ENCODE measurements at regions of chr14 and their contacts with region 1.

Region 1: DNA sequence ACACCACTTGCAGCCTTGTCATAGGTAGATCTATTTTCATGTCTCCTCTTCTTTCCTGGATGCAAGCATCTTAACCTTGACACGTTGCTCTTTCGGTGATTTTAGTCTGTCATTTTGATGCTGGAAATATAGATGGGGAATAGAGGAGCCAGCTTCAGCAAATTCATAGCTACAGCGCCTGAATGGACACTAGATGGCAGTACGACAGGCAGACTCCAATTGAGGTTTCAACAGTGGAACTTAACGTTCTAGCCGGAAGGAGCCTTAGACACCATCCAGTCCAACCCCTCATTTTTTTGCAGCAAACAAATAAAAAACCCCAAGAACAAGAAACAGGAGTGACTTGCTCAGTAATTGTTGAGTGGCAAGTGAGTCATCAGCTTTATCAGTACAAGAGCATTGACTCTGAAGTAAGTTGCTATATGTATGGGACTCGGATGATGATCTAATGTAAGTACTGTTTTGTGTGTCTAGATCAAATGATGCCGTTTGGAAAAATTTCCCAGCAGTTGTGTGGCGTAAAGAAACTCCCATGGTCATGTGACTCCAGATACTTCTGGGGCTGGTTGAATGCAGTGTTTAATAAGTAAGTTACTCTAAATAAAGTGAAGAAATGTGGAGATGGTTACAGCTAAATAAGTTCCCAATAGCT is 9.0 kb downstream of the DMAC2L start:
- DNase-seq: peak; percentile 86
- H3K4me3 ChIP-seq: peak overlapping the region; percentile 41
- H3K27ac ChIP-seq: peak overlapping the region; percentile 58
- H3K27me3 ChIP-seq: no peaks in the 10 kb centered on the region
- CTCF ChIP-seq: peak; percentile 95

Region 2: GRCh38 chr14:50003213-50004031 is 317.7 kb before region 1 on chr14:
- CTCF ChIA-PET with region 1: no interaction called
- POLR2A ChIA-PET with region 1: no interaction called
- DNase-seq: no peak
- H3K4me3 ChIP-seq: peak overlapping the region; percentile 58
- H3K27ac ChIP-seq: peak overlapping the region; percentile 39
- H3K27me3 ChIP-seq: no peaks in the 10 kb centered on the region
- CTCF ChIP-seq: peak; percentile 12; the same call in 1 of the 2 replicates

Region 3: DNA sequence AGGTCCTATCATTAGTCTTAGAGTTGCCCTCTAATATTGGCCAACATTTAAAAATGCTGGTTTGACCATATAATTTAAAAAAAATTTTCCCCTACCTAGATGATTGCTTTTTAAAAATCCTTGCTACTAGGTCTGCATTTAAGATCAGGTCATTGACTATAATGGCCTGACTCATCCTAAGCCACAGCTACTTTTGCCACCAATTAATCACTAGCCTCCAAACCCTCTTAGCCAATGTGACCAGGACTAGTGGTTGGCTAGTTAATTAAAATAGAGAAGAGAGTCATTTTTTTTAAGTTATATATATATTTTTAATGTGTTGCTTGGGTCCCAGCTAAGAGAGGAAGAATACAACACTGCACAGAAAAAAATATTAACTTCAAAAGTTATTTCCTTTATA is 147.2 kb before region 1 on chr14:
- CTCF ChIA-PET with region 1: no interaction called
- POLR2A ChIA-PET with region 1: no interaction called
- DNase-seq: no peak
- H3K4me3 ChIP-seq: no peak overlapping the region
- H3K27ac ChIP-seq: no peak overlapping the region
- H3K27me3 ChIP-seq: no peaks in the 10 kb centered on the region
- CTCF ChIP-seq: no peak

Region 4: DNA sequence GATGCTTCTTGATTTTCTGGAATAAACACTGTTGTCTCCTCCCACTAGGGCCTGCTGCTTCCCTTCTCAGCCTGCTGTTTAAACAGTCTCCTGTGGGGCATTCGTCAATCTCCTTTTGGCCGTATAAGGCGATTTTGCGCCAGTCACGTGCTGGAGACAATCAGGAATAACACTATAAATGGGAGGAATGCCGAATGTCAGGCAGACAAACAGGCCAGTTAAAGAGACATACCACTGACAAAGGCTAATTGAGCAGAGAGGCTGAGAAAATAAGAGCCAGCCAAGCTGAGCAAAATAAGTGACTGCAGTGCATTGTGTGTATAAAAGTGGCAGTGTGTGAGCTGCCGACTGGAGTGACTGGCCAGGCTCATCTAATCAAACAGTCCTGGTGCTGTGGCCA is 14.3 kb after region 1 on chr14:
- CTCF ChIA-PET with region 1: interaction called, 18 read pairs
- POLR2A ChIA-PET with region 1: interaction called, 10 read pairs
- DNase-seq: no peak
- H3K4me3 ChIP-seq: no peak overlapping the region
- H3K27ac ChIP-seq: peak overlapping the region; percentile 12
- H3K27me3 ChIP-seq: no peaks in the 10 kb centered on the region
- CTCF ChIP-seq: 0 out of 2 replicates have a peak, but pooled peaks have one; percentile 12

Region 5: GRCh38 chr14:50396631-50397390 is 75.7 kb after region 1 on chr14 and contains the start of gene CDKL1:
- CTCF ChIA-PET with region 1: interaction called, 20 read pairs
- POLR2A ChIA-PET with region 1: interaction called, 3 read pairs
- DNase-seq: peak; percentile 7
- H3K4me3 ChIP-seq: peak within 1 kb of the TSS; percentile 61
- H3K27ac ChIP-seq: peak within 1 kb of the TSS; percentile 57
- H3K27me3 ChIP-seq: no peaks in the 10 kb centered on the region
- CTCF ChIP-seq: no peak
- polyA plus RNA-seq, gene CDKL1: 8.2 and 20.1 TPM in 2 replicates

Region 6: GRCh38 chr14:50425816-50426215 is 104.7 kb after region 1 on chr14:
- CTCF ChIA-PET with region 1: interaction called, 10 read pairs
- POLR2A ChIA-PET with region 1: no interaction called
- DNase-seq: peak; percentile 7
- H3K4me3 ChIP-seq: no peak overlapping the region
- H3K27ac ChIP-seq: no peak overlapping the region
- H3K27me3 ChIP-seq: no peaks in the 10 kb centered on the region
- CTCF ChIP-seq: no peak

Region 7: DNA sequence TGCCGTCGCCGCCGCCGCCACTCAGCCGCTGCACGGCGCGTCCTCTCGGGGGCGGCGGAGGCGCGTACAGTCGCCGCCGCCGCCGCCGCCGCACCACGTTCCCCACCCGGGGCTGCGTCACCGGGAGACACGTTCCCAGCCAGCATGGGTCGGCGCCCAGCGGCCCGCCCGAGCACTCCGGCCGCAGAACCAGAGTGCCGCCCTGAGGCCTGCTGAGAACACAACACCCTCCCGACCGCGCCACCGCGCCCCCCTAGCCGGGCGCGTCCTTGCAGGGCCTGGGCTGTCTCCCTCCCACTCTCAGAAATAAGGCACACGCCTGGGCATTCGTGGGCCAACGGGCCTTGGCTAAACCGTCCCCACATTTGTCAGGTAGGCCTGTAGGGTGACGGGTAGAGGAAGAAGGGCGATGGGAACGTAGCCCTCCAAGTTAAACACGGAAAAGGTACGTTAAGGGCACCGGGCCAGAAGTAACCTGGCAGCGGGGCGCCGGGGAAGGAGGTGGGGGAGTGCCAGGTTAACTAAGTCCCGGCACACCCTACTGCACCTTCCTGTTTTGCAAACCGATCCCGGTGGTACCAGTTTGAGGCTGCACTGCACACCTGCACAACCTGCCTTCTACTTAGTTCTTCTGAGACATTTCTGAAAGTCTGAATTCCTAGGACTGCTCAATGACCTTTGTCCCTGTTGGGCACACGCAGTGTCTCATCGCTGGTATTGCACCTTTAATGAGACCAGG is 211.5 kb after region 1 on chr14 and contains the start of gene MAP4K5:
- CTCF ChIA-PET with region 1: interaction called, 19 read pairs
- POLR2A ChIA-PET with region 1: no interaction called
- DNase-seq: peak; percentile 70
- H3K4me3 ChIP-seq: peak within 1 kb of the TSS; percentile 80
- H3K27ac ChIP-seq: peak within 1 kb of the TSS; percentile 79
- H3K27me3 ChIP-seq: no peaks in the 10 kb centered on the region
- CTCF ChIP-seq: peak; percentile 83
- polyA plus RNA-seq, gene MAP4K5: 30.3 and 35.4 TPM in 2 replicates